MCF 10A (cell line): ENCODE measurements at regions of chr12 and their contacts with region 1.

Region 1: DNA sequence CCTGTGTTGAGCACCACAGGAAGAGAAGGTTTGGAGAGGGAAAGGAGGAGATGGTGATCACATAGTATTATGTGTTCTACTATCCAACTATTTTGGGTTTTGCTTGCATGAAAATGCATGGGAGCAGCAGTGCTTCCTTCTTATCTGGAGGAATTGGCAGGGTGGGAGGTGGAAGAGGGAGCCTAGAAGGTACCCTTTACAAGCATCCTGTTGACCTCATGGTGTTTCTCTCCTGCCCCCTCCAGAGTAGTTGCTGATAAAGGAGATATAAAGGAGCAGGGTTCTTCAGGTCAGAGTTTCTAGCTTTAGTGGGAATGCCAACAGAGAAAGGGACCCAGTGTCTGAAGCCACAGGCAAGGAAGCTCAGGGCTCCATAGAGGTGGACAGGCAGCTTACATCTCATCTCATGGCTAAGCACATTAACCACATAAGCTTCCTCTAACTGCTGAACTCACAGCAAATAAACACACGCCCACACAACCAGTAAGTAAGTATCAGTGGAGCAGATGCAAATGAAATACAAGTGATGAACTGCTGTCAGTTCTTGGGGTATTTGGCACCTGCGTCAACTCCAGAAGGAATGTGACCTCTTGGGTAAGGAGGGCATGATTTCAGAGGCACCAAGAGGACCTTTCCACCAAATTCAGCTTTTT is 174.2 kb upstream of the SLC38A2 start:
- DNase-seq: no peak
- H3K4me3 Mint-ChIP-seq: no peak overlapping the region
- H3K27ac Mint-ChIP-seq: peak overlapping the region; percentile 98
- H3K4me1 Mint-ChIP-seq: peaks cover 55% of the 10 kb centered on the region
- H3K27me3 Mint-ChIP-seq: no peaks in the 10 kb centered on the region
- CTCF ChIP-seq: no peak

Region 2: GRCh38 chr12:46198913-46199312 is 347.8 kb before region 1 on chr12:
- CTCF ChIA-PET with region 1: no interaction called
- POLR2A ChIA-PET with region 1: no interaction called
- intact Hi-C with region 1: no loop called
- DNase-seq: no peak
- H3K4me3 Mint-ChIP-seq: no peak overlapping the region
- H3K27ac Mint-ChIP-seq: no peak overlapping the region
- H3K4me1 Mint-ChIP-seq: no peaks in the 10 kb centered on the region
- H3K27me3 Mint-ChIP-seq: no peaks in the 10 kb centered on the region
- CTCF ChIP-seq: no peak

Region 3: GRCh38 chr12:46357438-46358324 is 189.1 kb before region 1 on chr12:
- CTCF ChIA-PET with region 1: no interaction called
- POLR2A ChIA-PET with region 1: interaction called, 12 read pairs
- intact Hi-C with region 1: no loop called
- DNase-seq: peak; percentile 72
- H3K4me3 Mint-ChIP-seq: no peak overlapping the region
- H3K27ac Mint-ChIP-seq: peak overlapping the region; percentile 7
- H3K4me1 Mint-ChIP-seq: peaks cover 18% of the 10 kb centered on the region
- H3K27me3 Mint-ChIP-seq: no peaks in the 10 kb centered on the region
- CTCF ChIP-seq: no peak

Region 4: DNA sequence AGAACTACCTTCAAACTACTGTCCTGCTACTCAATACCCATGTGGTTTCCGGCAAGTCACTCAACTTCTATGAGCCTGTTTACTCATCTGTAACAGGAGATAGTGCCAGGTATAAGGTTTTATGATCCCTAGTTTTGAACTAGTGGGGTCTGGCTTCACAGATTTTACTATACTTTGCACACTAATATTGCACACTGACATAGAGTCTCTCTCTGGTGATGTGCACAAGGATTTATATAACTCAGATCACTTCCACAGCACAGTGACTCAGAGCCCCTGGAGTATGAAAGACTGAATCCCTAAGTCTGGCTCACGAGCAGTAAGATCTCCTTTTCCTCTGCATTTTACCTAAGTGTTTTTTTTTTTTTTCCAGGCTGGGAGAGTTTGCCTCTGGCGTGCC is 104.5 kb before region 1 on chr12:
- CTCF ChIA-PET with region 1: no interaction called
- POLR2A ChIA-PET with region 1: interaction called, 12 read pairs
- intact Hi-C with region 1: no loop called
- DNase-seq: peak; percentile 54
- H3K4me3 Mint-ChIP-seq: peak overlapping the region; percentile 28
- H3K27ac Mint-ChIP-seq: peak overlapping the region; percentile 97
- H3K4me1 Mint-ChIP-seq: peaks cover 61% of the 10 kb centered on the region
- H3K27me3 Mint-ChIP-seq: no peaks in the 10 kb centered on the region
- CTCF ChIP-seq: no peak

Region 5: DNA sequence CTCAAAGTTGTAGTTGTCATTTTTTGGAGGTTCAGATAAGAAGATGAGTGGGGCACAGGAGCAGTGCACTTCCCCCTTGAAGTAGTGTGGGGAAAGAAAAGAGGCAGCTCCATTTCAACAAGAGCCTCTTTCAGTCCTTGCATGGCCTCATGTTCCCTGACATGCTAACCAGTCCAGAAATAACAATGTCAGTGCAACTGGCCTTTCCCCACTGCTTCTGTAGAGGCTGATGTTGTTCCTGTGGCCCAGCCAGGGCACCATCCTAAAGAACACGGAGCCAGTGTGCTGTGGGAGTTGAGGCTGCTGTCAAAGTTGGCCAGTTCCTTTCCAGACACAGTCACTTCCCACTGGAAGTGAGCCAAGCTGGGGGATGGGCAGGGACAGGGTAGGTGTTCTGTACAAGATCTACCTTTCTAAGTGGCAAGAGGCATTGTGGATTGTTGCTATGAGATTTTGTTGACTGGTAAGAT is 96.4 kb before region 1 on chr12:
- CTCF ChIA-PET with region 1: interaction called, 3 read pairs
- POLR2A ChIA-PET with region 1: interaction called, 10 read pairs
- intact Hi-C with region 1: no loop called
- DNase-seq: peak; percentile 73
- H3K4me3 Mint-ChIP-seq: no peak overlapping the region
- H3K27ac Mint-ChIP-seq: peak overlapping the region; percentile 90
- H3K4me1 Mint-ChIP-seq: peaks cover 64% of the 10 kb centered on the region
- H3K27me3 Mint-ChIP-seq: no peaks in the 10 kb centered on the region
- CTCF ChIP-seq: no peak

Region 6: DNA sequence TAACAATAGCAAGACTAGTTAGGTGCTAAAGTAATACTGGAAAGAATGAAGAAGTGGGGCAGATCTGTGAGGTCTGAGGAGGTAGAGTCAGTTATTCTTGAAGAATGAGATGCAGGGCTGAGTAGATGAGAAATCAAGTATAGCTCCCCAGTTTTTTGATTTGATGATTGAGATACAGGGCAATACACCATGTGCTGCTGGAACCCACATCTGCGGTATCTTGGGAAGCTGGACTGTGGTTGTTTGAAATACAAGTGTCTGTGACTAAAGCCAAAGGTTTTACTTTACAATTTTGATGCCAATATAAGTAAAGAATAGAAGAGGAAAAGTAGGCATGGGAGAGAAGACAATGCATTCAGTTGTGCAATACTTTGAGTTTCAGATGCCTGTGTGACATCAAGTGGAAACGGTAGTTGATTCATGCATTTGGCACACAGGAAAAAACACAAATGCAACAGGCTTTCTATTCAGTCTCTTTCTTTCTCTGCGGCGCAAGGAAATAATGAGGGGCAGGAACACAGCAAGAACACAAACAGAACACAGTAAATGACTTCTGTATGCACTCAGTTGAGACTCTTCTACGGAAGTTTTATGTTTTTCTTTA is 16.0 kb after region 1 on chr12:
- CTCF ChIA-PET with region 1: interaction called, 5 read pairs
- POLR2A ChIA-PET with region 1: interaction called, 19 read pairs
- intact Hi-C with region 1: no loop called
- DNase-seq: peak; percentile 95
- H3K4me3 Mint-ChIP-seq: peak overlapping the region; percentile 26
- H3K27ac Mint-ChIP-seq: peak overlapping the region; percentile 69
- H3K4me1 Mint-ChIP-seq: peaks cover 40% of the 10 kb centered on the region
- H3K27me3 Mint-ChIP-seq: no peaks in the 10 kb centered on the region
- CTCF ChIP-seq: no peak